Dorsolateral prefrontal cortex (tissue), 120 donors: ENCODE measurements at regions of chr17 and their contacts with region 1.

Region 1: GRCh38 chr17:72618001-72618509 is 474.4 kb downstream of the SLC39A11 start:
- DNase-seq: peak in 1 of 10 donors; percentile 22
- H3K4me3 ChIP-seq: peak overlapping the region in 10 of 59 donors; percentile 5 to 30 (median 14)
- H3K27ac ChIP-seq: no peak overlapping the region
- H3K27me3 ChIP-seq: peaks cover 0 to 23% (median 0%) of the 10 kb centered on the region in 45 donors
- CTCF ChIP-seq: no peak

Region 2: GRCh38 chr17:72576289-72576759 is 41.7 kb before region 1 on chr17:
- intact Hi-C with region 1: loop called in 1 of 2 experiments (anchors 5 kb)
- DNase-seq: peak in 3 of 10 donors; percentile 41 to 59 (median 53)
- H3K4me3 ChIP-seq: peak overlapping the region in 2 of 59 donors; percentile 16
- H3K27ac ChIP-seq: peak overlapping the region in 28 of 59 donors; percentile 10 to 76 (median 47)
- H3K27me3 ChIP-seq: peaks cover 0 to 38% (median 0%) of the 10 kb centered on the region in 45 donors
- CTCF ChIP-seq: no peak

Region 3: DNA sequence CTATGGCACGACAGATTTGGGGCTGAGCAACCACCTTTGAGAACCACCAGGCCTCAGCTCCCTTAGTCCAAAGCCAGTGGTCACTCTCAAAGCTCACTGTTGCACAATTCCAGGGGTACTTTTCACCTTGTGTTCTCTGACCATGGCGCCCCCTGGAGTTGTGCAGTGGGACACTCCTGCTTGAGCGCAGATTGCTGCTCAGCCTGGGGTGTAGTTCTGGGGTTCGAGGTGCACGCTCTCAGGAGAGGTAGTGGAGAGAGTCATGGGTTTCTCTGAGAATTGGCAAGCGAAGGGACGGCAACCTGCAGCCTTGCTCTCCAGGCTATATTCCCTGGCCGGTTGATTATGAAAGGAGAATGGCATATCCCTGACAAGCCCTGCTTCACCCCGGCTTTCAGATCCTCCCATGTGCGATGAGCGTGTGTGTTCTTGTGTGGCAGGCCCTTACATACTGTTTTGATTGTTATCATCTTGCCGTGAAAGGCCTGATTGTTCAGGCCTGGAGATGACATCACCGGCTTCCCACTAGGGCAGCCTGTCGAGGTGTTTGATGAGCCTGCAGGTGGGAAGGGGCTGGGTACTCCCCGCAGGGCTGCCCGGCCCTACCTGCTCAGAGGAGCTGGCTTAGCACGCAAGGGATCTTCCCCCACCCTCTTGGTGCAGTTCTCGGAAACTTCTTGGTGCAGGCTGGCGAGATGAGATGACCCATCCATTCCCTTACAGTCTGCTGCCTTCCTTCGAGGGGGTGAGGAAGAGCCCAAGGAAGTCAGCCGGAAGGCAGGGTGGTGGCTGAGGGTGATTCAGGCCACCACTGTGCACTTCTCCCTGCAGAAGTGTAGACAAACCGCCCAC is 43.3 kb after region 1 on chr17:
- intact Hi-C with region 1: loop called in 1 of 2 experiments (anchors 5 kb)
- DNase-seq: peak in 2 of 10 donors; percentile 39 to 42
- H3K4me3 ChIP-seq: no peak overlapping the region
- H3K27ac ChIP-seq: no peak overlapping the region
- H3K27me3 ChIP-seq: no peaks in the 10 kb centered on the region
- CTCF ChIP-seq: no peak

Region 4: DNA sequence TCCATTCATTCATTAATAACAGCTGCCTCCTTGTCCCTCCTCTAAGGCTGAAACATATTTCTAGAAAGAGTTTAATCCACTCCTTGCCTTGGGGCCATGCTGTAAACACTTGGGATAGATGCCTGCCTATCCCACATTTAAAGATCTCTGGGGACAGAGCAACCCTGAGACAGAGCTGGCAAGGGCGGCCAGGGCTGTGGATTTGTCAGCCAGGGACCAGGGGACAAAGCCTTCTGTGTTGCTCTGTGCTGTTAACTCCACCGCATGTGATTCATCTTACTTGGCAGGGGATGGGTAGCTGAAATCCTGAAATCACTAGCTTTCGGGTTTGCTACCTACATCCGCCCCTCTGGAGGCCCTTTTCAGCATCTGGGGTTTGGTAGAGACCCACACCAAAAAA is 81.5 kb after region 1 on chr17:
- intact Hi-C with region 1: loop called in 1 of 2 experiments (anchors 5 kb)
- DNase-seq: peak in 9 of 10 donors; percentile 31 to 86 (median 64)
- H3K4me3 ChIP-seq: no peak overlapping the region
- H3K27ac ChIP-seq: peak overlapping the region in 22 of 59 donors; percentile 18 to 68 (median 40)
- H3K27me3 ChIP-seq: no peaks in the 10 kb centered on the region
- CTCF ChIP-seq: no peak

Region 5: DNA sequence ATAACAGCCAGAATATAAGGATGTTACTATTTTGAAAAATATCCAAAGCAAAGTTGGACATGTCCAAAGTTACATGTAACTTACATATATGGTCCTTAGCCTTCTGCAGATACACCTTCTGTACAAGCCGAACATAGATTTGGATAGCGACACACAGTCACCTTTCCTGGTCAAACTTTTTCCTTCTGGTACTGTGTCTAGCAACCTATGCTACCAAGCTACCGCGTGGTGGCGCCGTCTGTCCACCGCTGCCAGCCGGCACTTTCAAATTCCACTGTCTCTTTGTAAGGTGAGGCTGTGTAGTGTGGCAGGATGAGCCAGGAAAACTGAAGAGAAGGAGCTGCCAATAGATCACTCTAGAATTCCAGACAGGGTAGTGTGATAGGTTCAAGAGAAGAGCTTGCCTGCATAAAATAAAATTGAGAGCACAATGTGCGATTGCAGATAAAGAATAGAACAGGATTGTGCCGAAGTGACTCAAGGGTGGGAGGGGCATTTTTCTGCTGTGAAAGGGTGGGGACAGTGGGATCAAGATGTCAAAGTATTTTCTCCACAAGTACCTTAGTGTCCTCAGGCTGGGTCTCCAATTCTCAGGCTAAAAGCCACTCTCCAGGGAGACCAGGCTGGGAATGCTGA is 107.5 kb after region 1 on chr17:
- intact Hi-C with region 1: no loop called
- DNase-seq: peak; percentile 43 to 81 (median 70)
- H3K4me3 ChIP-seq: no peak overlapping the region
- H3K27ac ChIP-seq: no peak overlapping the region
- H3K27me3 ChIP-seq: no peaks in the 10 kb centered on the region
- CTCF ChIP-seq: peak; percentile 51 to 98 (median 87)